SK-N-SH (cell line): ENCODE measurements at regions of chr10 and their contacts with region 1.

Region 1: GRCh38 chr10:128263891-128264688 is 137.9 kb upstream of the MKI67 start:
- DNase-seq: peak; percentile 68
- H3K4me3 ChIP-seq: peak overlapping the region in 1 of 2 experiments; percentile 47; a peak in 1 of 4 replicates
- H3K27ac ChIP-seq: peak overlapping the region in 1 of 2 experiments; percentile 71; a peak in 2 of 4 replicates
- H3K4me1 ChIP-seq: peaks cover 0 to 19% of the 10 kb centered on the region in 2 experiments; a peak in 2 of 4 replicates
- H3K27me3 ChIP-seq: no peaks in the 10 kb centered on the region
- CTCF ChIP-seq: peak; percentile 46
- EP300 ChIP-seq: no peak; a peak in 1 of 4 replicates
- RAD21 ChIP-seq: peak; percentile 56

Region 2: GRCh38 chr10:128274938-128275337 is 10.8 kb after region 1 on chr10:
- CTCF ChIA-PET with region 1: interaction called, 16 read pairs
- POLR2A ChIA-PET with region 1: no interaction called
- DNase-seq: no peak
- H3K4me3 ChIP-seq: no peak overlapping the region
- H3K27ac ChIP-seq: no peak overlapping the region
- H3K4me1 ChIP-seq: peaks cover 0 to 15% of the 10 kb centered on the region in 2 experiments; a peak in 1 of 4 replicates
- H3K27me3 ChIP-seq: no peaks in the 10 kb centered on the region
- CTCF ChIP-seq: no peak
- EP300 ChIP-seq: no peak
- RAD21 ChIP-seq: no peak

Region 3: GRCh38 chr10:128286762-128287500 is 22.8 kb after region 1 on chr10:
- CTCF ChIA-PET with region 1: interaction called, 17 read pairs
- POLR2A ChIA-PET with region 1: interaction called, 3 read pairs
- DNase-seq: peak; percentile 79
- H3K4me3 ChIP-seq: peak overlapping the region in 1 of 2 experiments; percentile 17; a peak in 1 of 4 replicates
- H3K27ac ChIP-seq: no peak overlapping the region
- H3K4me1 ChIP-seq: no peaks in the 10 kb centered on the region
- H3K27me3 ChIP-seq: no peaks in the 10 kb centered on the region
- CTCF ChIP-seq: no peak
- EP300 ChIP-seq: no peak
- RAD21 ChIP-seq: no peak

Region 4: DNA sequence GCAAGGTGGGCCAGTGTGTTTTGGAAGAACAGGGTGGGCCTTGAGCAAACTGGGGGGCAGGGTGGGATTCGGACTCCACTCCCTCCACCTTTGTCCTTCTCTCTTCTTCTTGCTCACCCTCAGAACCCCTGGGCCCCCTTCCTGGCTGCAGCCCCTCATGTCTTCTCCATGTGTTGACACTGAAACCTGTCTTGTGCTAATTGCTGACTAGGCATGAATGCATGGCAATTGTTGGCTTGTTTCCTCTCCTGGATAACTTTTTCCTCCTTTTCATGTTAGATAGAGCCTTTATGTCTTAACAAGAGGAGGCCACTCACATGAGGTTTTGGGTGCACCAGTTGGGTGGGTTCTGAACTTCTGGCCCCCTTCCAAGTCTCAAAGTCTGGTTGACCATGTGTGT is 43.7 kb after region 1 on chr10:
- CTCF ChIA-PET with region 1: no interaction called
- POLR2A ChIA-PET with region 1: no interaction called
- DNase-seq: no peak
- H3K4me3 ChIP-seq: no peak overlapping the region
- H3K27ac ChIP-seq: no peak overlapping the region
- H3K4me1 ChIP-seq: no peaks in the 10 kb centered on the region
- H3K27me3 ChIP-seq: no peaks in the 10 kb centered on the region
- CTCF ChIP-seq: no peak
- EP300 ChIP-seq: no peak
- RAD21 ChIP-seq: no peak

Region 5: GRCh38 chr10:128530301-128530700 is 266.2 kb after region 1 on chr10:
- CTCF ChIA-PET with region 1: interaction called, 82 read pairs
- POLR2A ChIA-PET with region 1: no interaction called
- DNase-seq: peak; percentile 58
- H3K4me3 ChIP-seq: no peak overlapping the region; a peak in 1 of 4 replicates
- H3K27ac ChIP-seq: no peak overlapping the region
- H3K4me1 ChIP-seq: peaks cover 0 to 15% of the 10 kb centered on the region in 2 experiments; a peak in 2 of 4 replicates
- H3K27me3 ChIP-seq: no peaks in the 10 kb centered on the region
- CTCF ChIP-seq: peak; percentile 37
- EP300 ChIP-seq: no peak
- RAD21 ChIP-seq: peak; percentile 53

Region 6: GRCh38 chr10:129971381-129972144 is 1707.5 kb after region 1 on chr10:
- CTCF ChIA-PET with region 1: interaction called, 12 read pairs
- POLR2A ChIA-PET with region 1: no interaction called
- DNase-seq: peak; percentile 96
- H3K4me3 ChIP-seq: peak overlapping the region; percentile 29 to 31; a peak in 2 of 4 replicates
- H3K27ac ChIP-seq: no peak overlapping the region
- H3K4me1 ChIP-seq: no peaks in the 10 kb centered on the region; a peak in 1 of 4 replicates
- H3K27me3 ChIP-seq: peaks cover 43% of the 10 kb centered on the region
- CTCF ChIP-seq: peak; percentile 35
- EP300 ChIP-seq: no peak
- RAD21 ChIP-seq: peak; percentile 67